Dorsolateral prefrontal cortex (tissue), 120 donors: ENCODE measurements at regions of chr1 and their contacts with region 1.

Region 1: DNA sequence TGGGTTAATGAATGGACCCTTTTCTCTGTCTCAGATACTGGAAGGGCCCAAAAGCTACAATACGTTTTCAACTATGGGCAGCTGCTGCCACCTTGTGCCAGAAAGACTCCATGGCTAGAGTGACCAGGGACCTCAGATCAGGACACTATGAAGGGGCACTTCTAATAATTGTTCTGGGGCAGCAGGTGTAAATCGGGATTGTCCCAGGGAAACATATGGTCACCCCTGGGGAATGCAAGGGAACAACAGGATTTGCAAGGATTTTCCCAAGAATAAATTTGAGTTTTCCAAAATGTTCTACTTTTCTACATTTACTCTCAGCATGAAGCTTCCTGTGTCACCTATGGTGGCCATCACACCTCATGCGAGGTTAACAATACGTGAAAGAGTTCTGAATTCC is 12.0 kb upstream of the FCAMR start:
- DNase-seq: peak in 9 of 10 donors; percentile 42 to 80 (median 59)
- H3K4me3 ChIP-seq: no peak overlapping the region
- H3K27ac ChIP-seq: no peak overlapping the region
- H3K27me3 ChIP-seq: peaks cover 0 to 7% (median 0%) of the 10 kb centered on the region in 45 donors
- CTCF ChIP-seq: peak; percentile 14 to 87 (median 70)

Region 2: DNA sequence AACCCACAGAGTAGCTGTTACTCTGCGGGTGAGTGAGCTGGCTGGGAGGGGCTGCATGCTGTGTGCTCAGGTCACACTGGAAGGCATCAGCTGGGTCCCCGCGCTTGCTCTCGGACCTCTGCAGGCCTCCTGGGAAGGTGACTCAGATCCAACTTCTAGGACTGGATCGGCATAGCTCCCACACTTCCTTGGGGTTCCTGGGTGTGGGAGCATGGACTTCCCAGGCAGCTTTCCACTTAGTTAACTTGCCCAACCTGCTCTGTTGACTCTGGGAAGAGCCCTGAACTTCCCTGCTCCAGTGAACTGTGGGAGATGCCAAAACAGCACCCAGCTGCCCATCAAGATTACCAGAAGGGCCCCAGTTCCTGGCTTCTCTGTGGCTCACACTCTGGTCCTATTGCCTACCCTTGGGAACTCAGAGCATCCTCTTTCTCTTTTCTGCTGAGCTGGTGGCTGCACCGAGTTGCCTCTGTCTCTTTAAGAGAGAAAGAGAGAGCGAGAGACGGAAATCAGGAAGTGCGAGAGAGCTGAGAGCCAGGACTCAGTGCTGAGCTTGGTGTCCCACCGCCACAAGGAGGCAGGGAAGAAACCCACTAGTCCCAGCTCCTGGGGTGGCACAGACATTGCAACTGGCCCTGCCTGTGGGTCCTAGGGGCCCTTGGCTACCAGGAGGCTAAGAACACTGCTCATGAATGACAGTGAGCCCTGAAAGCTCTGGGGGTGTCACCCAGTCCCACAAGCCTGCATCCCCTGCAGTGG is 512.1 kb before region 1 on chr1 and contains the start of gene IKBKE:
- intact Hi-C with region 1: loop called in 1 of 2 experiments (anchors 10 kb)
- DNase-seq: peak in 6 of 10 donors; percentile 26 to 65 (median 54)
- H3K4me3 ChIP-seq: peak within 1 kb of the TSS; percentile 16 to 75 (median 55)
- H3K27ac ChIP-seq: peak within 1 kb of the TSS in 10 of 59 donors; percentile 6 to 58 (median 48)
- H3K27me3 ChIP-seq: no peaks in the 10 kb centered on the region
- CTCF ChIP-seq: peak in 10 of 56 donors; percentile 6 to 21 (median 11)
- total RNA-seq, gene IKBKE: 1.3 to 8.1 (median 3.2) TPM

Region 3: DNA sequence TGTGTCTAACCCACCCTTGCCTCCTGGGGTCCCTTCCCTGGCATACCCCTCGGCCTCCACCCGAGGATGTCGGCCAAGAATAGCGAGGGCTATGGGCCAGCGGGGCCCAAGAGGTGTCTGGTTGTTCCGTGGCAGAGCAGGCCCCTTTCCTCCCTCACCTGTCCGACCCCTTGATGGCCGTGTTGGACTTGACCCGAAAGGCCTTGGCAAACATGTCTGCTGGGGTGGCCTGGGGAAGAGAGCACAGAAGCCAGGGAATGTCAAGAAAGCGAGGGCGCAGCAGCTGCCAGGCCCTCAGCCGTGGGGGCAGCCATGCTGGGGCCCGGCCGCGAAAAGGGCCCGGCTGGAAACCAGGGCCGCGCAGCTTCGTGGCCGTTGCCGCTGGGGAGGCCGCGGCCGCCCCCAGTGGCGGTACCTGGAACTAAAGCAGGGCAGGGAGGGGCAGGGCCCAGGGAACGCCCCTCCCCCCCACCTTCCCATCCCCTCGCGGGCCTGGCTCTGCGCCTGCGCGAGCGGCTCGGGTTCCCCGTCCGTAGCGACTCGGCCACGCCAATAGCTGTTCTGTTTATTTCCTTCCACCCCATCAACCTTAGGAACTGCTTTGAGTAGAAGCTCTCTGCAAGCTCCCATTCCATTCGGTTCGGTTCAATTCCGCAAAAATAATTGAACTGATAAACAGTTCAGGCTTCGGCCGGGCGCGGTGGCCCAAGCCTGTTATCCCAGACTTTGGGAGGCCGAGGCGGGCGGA is 369.9 kb before region 1 on chr1 and contains the start of gene EIF2D:
- intact Hi-C with region 1: loop called in 1 of 2 experiments (anchors 5 kb)
- DNase-seq: peak; percentile 88 to 96 (median 91)
- H3K4me3 ChIP-seq: peak within 1 kb of the TSS; percentile 61 to 99 (median 84)
- H3K27ac ChIP-seq: peak within 1 kb of the TSS; percentile 54 to 93 (median 85)
- H3K27me3 ChIP-seq: no peaks in the 10 kb centered on the region
- CTCF ChIP-seq: peak; percentile 74 to 99 (median 95)
- total RNA-seq, gene EIF2D: 19.2 to 56.2 (median 35.0) TPM

Region 4: GRCh38 chr1:206635080-206635977 is 346.9 kb before region 1 on chr1 and contains the start of gene DYRK3:
- intact Hi-C with region 1: loop called in 1 of 2 experiments (anchors 2 kb)
- DNase-seq: peak; percentile 87 to 97 (median 92)
- H3K4me3 ChIP-seq: peak within 1 kb of the TSS; percentile 57 to 100 (median 90)
- H3K27ac ChIP-seq: peak within 1 kb of the TSS in 48 of 59 donors; percentile 9 to 86 (median 63)
- H3K27me3 ChIP-seq: no peaks in the 10 kb centered on the region
- CTCF ChIP-seq: peak in 48 of 56 donors; percentile 9 to 61 (median 42)
- total RNA-seq, gene DYRK3: 2.4 to 12.2 (median 5.3) TPM

Region 5: GRCh38 chr1:206658264-206658980 is 323.8 kb before region 1 on chr1:
- intact Hi-C with region 1: loop called in 1 of 2 experiments (anchors 10 kb)
- DNase-seq: no peak
- H3K4me3 ChIP-seq: peak overlapping the region in 15 of 59 donors; percentile 0 to 49 (median 18)
- H3K27ac ChIP-seq: no peak overlapping the region
- H3K27me3 ChIP-seq: peaks cover 0 to under 1% (median 0%) of the 10 kb centered on the region in 45 donors
- CTCF ChIP-seq: peak in 55 of 56 donors; percentile 28 to 73 (median 61)

Region 6: DNA sequence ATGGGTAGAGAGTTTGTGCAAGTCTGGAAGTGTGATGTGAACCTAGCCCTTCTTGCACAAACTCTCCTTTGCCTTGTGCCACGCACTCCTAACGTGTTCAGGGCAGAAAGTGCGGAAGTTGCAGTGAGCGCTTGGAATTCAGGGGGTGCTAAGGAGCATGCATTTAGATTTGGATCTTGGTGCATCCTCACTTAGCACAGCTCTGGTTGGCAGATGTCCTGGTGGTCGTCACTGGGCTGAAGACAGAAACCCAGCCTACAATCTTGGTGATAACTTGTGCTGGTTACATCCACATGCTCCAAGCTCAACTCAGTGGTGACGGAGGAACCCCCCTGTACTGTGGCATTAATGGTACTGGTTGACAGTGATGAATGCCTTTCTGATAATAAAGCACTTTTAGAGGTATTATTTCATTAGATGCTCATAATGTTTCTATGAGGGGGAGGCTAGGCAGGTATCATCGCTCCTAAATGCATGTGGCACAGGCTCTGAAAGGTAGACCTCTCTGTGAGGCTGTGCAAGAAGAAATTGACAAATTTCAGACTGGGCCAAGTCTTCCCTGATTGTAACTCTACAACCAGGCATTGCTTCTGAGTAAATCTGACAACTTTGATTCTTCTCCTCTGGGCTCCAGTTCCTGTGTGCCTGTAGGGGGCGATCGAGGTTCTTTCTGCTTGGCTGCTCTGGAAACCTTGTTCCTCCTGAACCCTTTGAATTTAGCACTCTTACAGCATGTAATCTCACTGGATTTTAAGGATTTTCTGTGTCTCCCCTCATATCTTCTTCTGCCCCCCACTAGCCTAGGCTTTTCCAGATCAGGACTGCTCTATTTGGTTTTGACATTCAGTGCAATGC is 256.9 kb before region 1 on chr1:
- intact Hi-C with region 1: loop called (anchors 5 to 10 kb)
- DNase-seq: peak in 4 of 10 donors; percentile 26 to 52 (median 36)
- H3K4me3 ChIP-seq: no peak overlapping the region
- H3K27ac ChIP-seq: no peak overlapping the region
- H3K27me3 ChIP-seq: no peaks in the 10 kb centered on the region
- CTCF ChIP-seq: peak in 53 of 56 donors; percentile 11 to 68 (median 51)

Region 7: DNA sequence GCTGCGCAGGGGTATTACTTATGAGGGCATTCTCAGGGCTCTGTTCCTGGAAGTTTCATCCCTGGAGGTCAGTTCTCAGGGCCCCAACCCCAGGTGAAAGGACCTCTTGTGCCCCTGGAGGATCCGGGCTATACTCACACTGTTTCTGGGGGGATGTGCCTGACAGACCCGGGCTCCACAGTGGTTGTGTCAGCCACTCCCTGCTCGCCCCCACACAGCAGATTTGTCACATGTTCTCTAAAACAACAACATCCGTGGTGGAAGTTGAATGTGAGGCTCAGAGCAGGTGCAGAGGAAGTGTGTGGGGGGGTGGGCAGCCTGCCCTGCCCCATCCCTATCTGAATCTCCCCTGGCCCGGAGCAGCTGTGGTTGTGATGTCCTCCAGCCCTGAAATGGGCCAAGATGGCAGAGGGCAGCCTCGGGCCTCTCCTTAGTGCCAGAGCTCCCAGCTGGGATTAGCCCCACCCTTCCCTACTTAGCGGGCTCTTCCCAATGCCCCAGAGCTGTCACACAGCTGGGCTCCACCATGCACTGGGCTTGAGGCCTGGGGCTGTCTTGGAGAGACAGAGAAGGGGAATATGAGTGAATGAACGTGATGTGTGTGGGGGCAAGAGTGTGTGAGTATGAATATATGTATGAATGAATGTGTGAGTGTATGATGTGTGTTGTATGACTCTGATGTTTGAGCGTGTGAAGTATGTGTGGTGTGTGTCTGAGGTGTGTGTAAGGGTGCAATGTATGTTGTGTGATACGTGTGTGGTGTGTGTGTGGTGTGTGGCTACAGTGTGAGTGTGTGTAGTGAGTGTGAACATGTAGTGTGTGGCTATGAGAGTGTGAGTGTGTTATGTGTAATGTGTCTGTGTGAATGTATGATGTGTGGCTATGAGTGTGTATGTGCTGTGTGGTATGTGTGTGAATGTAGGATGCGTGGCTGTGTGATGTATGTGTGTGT is 58.9 kb before region 1 on chr1:
- intact Hi-C with region 1: loop called in 1 of 2 experiments (anchors 5 kb)
- DNase-seq: no peak
- H3K4me3 ChIP-seq: no peak overlapping the region
- H3K27ac ChIP-seq: peak overlapping the region in 12 of 59 donors; percentile 10 to 66 (median 42)
- H3K27me3 ChIP-seq: peaks cover 0 to 4% (median 0%) of the 10 kb centered on the region in 45 donors
- CTCF ChIP-seq: no peak

Region 8: DNA sequence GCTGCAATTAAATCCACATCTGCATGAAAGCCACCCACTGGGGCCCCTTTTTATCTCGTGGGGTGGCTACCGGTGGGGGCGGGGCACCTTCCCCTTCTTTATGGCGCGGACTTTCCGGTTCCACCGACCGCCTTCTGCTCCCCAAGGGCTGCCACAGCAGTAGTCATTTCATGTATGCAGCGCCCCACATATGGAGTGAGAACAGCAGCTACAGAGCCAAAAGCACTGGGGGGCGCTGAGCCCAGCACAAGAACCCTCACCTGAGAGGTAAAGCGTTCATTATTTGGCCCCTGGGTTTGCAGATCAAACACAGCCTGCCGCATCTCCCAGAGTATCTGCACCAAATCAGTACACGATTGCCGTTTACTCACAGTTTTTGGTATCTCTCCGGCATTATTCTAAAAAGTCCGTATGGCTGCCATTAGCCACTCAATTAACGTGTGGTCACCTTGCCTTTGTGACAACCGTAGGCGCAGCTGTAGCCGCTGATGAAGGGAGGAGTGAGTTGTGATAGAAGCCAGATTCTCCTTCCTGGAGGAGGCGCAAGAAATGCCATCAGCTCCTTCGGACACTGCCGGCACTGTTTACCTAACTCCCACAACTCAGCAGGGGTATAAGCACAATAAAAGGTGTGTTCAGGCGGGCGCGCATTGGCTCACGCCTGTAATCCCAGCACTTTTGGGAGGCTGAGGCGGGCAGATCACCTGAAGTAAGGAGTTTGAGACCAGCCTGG is 441.5 kb after region 1 on chr1:
- intact Hi-C with region 1: no loop called
- DNase-seq: no peak
- H3K4me3 ChIP-seq: no peak overlapping the region
- H3K27ac ChIP-seq: no peak overlapping the region
- H3K27me3 ChIP-seq: peaks cover 0 to 37% (median 10%) of the 10 kb centered on the region in 45 donors
- CTCF ChIP-seq: no peak